ENCODE measurements at regions of chr17 and their contacts with region 1.

Region 1: DNA sequence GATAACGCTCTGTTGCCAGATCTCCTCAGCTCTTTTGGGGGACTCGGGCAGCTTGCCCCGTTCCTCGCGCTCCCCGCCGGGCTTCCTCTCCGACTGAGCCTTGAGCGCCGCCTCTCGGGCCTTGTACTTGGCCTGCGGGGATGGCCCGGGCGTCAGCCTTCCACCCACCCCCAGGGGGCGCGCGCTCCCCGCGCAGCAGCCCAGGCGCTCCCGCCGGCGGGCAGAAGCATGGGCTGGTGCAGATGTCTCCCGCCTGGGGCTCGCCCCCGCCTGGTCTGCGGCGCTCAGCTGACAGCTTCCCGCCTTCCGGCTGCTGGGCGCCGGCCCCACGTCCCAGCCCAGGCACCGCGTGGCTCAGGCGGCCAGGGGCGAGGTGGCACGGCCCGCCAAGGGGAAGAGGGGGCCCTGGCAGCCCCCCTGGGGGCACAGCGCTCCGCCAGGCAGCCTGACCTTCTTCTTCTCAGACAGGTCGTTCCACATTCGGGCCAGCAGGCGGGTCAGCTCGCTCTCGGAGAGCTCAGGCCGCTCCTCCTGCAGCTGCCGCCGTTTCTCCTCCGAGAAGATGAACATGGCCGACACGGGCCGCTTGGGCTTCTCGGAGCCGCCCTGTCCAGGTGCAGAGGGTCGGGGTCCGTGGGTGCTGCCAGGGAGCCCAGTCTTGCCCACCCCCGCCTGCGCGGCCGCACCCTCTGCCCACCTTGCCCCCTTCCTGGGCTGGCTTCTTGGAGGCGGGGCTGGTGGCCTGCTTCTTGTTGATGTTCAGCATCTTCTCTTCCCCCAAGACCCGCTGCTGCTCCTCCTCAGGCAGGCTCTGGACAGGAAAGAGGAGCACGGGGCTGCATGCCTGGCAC is 8.9 kb downstream of the UBTF start:
- DNase-seq: peak; percentile 83 to 96 (median 90)
- ATAC-seq: peak; percentile 96
- H3K4me3 ChIP-seq: peak overlapping the region in 1 of 2 experiments; percentile 12
- H3K4me3 Mint-ChIP-seq: peak overlapping the region; percentile 50
- H3K27ac ChIP-seq: peak overlapping the region in 1 of 2 experiments; percentile 33
- H3K27ac Mint-ChIP-seq: peak overlapping the region; percentile 83
- H3K4me1 ChIP-seq: peaks cover 58% of the 10 kb centered on the region
- H3K4me1 Mint-ChIP-seq: peaks cover 56% of the 10 kb centered on the region
- H3K27me3 ChIP-seq: no peaks in the 10 kb centered on the region
- H3K27me3 Mint-ChIP-seq: no peaks in the 10 kb centered on the region
- CTCF ChIP-seq: peak; percentile 99

Region 2: DNA sequence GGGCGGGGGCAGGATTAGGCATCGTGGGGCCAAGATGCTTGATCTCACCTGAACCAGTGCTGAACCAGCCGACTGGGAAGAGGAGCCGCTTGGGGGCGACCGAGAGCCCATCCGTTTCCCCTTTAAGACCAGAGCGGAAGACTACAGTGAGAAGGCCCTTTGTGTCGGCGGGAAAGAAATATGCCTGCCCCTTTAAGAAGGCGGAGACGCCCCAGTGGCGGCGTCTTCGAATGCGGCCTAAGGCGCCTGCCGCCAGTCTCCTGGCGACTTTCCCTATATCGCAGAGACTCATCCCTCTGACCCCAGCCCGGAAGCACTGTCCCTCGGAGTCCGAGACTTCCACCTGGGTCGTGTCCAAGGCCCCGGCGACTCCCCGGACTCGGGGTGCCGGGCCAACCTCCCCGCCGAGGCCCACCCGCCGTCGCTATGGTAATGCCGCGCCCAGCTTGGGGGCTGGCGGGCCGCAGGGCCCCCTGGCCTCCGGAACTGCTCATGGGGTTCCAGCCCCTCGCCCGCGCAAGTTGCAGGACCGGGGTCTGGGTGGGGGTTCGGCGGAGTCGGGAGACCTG is 68.8 kb before region 1 on chr17 and contains the start of gene HROB:
- CTCF ChIA-PET with region 1: interaction called, 6 read pairs
- POLR2A ChIA-PET with region 1: no interaction called
- intact Hi-C with region 1: loop called in 1 of 2 experiments (anchors 1 kb)
- DNase-seq: peak; percentile 95 to 99 (median 98)
- ATAC-seq: peak; percentile 91
- H3K4me3 ChIP-seq: peak within 1 kb of the TSS; percentile 62 to 80
- H3K4me3 Mint-ChIP-seq: peak within 1 kb of the TSS; percentile 84
- H3K27ac ChIP-seq: peak within 1 kb of the TSS; percentile 49 to 78
- H3K27ac Mint-ChIP-seq: peak within 1 kb of the TSS; percentile 49
- H3K4me1 ChIP-seq: peaks cover 11% of the 10 kb centered on the region
- H3K4me1 Mint-ChIP-seq: peaks cover 10% of the 10 kb centered on the region
- H3K27me3 ChIP-seq: peaks cover 0 to 14% of the 10 kb centered on the region in 2 experiments
- H3K27me3 Mint-ChIP-seq: peaks cover 10% of the 10 kb centered on the region
- CTCF ChIP-seq: peak; percentile 75
- total RNA-seq, gene HROB: 4.0 to 4.9 TPM

Region 3: GRCh38 chr17:44193326-44194084 is 17.1 kb before region 1 on chr17:
- CTCF ChIA-PET with region 1: interaction called, 15 read pairs
- POLR2A ChIA-PET with region 1: interaction called, 5 read pairs
- intact Hi-C with region 1: no loop called
- DNase-seq: no peak
- ATAC-seq: no peak
- H3K4me3 ChIP-seq: no peak overlapping the region
- H3K4me3 Mint-ChIP-seq: no peak overlapping the region
- H3K27ac ChIP-seq: no peak overlapping the region
- H3K27ac Mint-ChIP-seq: no peak overlapping the region
- H3K4me1 ChIP-seq: peaks cover 20% of the 10 kb centered on the region
- H3K4me1 Mint-ChIP-seq: peaks cover 22% of the 10 kb centered on the region
- H3K27me3 ChIP-seq: no peaks in the 10 kb centered on the region
- H3K27me3 Mint-ChIP-seq: no peaks in the 10 kb centered on the region
- CTCF ChIP-seq: no peak

Region 4: DNA sequence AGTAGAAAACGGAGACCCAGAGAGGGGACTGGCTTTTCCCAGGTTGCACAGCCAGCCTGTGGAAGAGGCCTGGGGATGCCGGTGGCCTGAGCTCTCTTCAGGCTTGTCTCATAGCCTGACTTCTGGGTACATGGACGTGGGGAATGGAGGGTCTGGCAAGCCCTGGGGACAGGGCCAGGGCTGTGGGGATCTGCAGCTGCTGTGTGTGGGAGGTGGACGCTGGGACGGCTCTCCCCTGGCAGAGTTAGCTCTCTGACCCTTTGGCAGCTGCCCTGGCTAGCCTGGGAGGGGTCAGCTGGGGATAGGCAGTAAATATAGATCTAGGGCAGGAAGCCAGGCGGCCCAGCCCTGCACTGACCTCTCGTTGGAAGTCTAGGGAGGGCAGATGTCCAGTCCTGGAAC is 36.9 kb after region 1 on chr17:
- CTCF ChIA-PET with region 1: interaction called, 5 read pairs
- POLR2A ChIA-PET with region 1: no interaction called
- intact Hi-C with region 1: loop called in 1 of 2 experiments (anchors 5 kb)
- DNase-seq: no peak
- ATAC-seq: no peak
- H3K4me3 ChIP-seq: no peak overlapping the region
- H3K4me3 Mint-ChIP-seq: peak overlapping the region; percentile 29
- H3K27ac ChIP-seq: no peak overlapping the region
- H3K27ac Mint-ChIP-seq: peak overlapping the region; percentile 76
- H3K4me1 ChIP-seq: peaks cover 47% of the 10 kb centered on the region
- H3K4me1 Mint-ChIP-seq: peaks cover 45% of the 10 kb centered on the region
- H3K27me3 ChIP-seq: no peaks in the 10 kb centered on the region
- H3K27me3 Mint-ChIP-seq: no peaks in the 10 kb centered on the region
- CTCF ChIP-seq: no peak

Region 5: DNA sequence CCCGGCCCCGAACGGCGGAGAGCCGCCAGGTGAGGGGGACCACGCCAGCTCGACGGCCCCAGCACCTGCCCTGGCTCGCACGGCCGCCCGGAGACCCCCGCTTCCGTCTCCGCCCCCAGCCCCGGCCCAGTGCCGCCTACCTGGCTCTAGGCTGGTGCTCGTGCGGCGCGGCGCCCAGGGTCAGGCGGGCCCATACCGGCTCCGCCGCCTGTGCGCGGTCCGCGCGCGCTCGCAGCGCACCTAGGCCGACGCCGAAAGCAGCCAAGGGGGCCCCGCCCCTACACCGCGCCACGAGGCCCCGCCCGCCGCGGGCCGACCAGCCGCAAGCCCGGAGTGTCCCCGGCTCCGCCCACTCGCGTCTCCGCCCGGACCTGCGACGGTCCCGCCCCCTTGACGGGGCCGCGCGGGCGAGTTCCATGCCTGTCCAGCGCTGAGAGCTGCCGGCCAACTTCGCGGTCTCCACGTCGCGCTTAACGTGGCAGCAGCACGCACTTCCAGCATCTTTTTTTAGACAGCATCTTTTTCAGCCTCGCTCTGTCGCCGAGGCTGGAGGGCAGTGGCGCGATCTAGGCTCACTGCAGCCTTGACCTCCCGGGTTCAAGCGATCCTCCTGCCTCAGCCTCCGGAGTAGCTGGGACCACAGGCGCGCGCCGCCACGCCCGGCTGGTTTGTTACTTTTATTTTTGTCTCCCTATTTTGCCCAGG is 114.2 kb after region 1 on chr17 and contains the start of gene SLC25A39:
- CTCF ChIA-PET with region 1: interaction called, 161 read pairs
- POLR2A ChIA-PET with region 1: interaction called, 22 read pairs
- intact Hi-C with region 1: loop called in 1 of 2 experiments (anchors 1 kb)
- DNase-seq: peak; percentile 90 to 98 (median 96)
- ATAC-seq: peak; percentile 72
- H3K4me3 ChIP-seq: peak within 1 kb of the TSS; percentile 84 to 91
- H3K4me3 Mint-ChIP-seq: peak within 1 kb of the TSS; percentile 88
- H3K27ac ChIP-seq: peak within 1 kb of the TSS; percentile 88 to 93
- H3K27ac Mint-ChIP-seq: peak within 1 kb of the TSS; percentile 96
- H3K4me1 ChIP-seq: peaks cover 14% of the 10 kb centered on the region
- H3K4me1 Mint-ChIP-seq: peaks cover 30% of the 10 kb centered on the region
- H3K27me3 ChIP-seq: no peaks in the 10 kb centered on the region
- H3K27me3 Mint-ChIP-seq: no peaks in the 10 kb centered on the region
- CTCF ChIP-seq: no peak
- total RNA-seq, gene SLC25A39: 73.1 to 77.7 TPM

Region 6: DNA sequence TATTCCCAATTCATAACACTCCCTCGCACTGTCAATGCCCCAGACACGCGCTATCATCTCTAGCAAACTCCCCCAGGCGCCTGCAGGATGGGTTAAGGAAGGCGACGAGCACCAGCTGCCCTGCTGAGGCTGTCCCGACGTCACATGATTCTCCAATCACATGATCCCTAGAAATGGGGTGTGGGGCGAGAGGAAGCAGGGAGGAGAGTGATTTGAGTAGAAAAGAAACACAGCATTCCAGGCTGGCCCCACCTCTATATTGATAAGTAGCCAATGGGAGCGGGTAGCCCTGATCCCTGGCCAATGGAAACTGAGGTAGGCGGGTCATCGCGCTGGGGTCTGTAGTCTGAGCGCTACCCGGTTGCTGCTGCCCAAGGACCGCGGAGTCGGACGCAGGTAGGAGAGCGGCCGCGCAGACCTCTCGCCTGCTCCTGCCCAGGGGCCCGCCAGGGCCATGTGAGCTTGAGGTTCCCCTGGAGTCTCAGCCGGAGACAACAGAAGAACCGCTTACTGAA is 134.4 kb after region 1 on chr17 and contains the start of gene GRN:
- CTCF ChIA-PET with region 1: interaction called, 36 read pairs
- POLR2A ChIA-PET with region 1: interaction called, 3 read pairs
- intact Hi-C with region 1: loop called in 1 of 2 experiments (anchors 1 kb)
- DNase-seq: peak; percentile 67 to 91 (median 83)
- ATAC-seq: peak; percentile 99
- H3K4me3 ChIP-seq: peak within 1 kb of the TSS; percentile 63 to 91
- H3K4me3 Mint-ChIP-seq: peak within 1 kb of the TSS; percentile 93
- H3K27ac ChIP-seq: peak within 1 kb of the TSS in 1 of 2 experiments; percentile 61
- H3K27ac Mint-ChIP-seq: peak within 1 kb of the TSS; percentile 70
- H3K4me1 ChIP-seq: peaks cover 12% of the 10 kb centered on the region
- H3K4me1 Mint-ChIP-seq: peaks cover 20% of the 10 kb centered on the region
- H3K27me3 ChIP-seq: no peaks in the 10 kb centered on the region
- H3K27me3 Mint-ChIP-seq: peaks cover 14% of the 10 kb centered on the region
- CTCF ChIP-seq: no peak
- total RNA-seq, gene GRN: 8.5 to 13.2 TPM

Region 7: DNA sequence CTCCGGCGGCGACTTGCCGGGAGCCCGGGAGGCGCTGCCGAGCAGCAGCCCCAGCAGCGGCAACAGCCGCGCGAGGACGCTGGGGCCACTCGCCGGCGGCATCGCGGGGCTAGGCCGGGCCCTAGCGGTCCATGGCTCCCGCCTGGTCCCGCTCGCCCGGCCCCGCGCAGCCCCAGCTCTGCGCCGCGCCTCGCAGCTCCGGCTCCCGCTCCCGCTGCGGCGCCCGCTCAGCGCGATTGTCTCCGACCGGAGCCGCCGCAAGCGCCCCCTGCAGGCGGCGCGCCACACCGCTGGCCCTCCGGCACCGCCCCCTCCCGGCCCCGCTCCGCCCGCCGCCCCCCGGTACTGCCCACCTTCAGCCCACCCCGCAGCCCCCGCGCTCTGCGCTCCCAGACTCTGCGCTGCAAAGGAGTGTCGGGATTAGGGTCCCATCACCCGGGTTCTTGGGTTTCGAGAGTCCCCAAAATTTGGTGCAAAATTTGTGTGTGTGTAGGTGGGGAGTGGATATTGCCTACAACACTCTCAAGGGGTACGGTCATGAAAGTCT is 153.1 kb after region 1 on chr17 and contains the start of gene FAM171A2:
- CTCF ChIA-PET with region 1: interaction called, 11 read pairs
- POLR2A ChIA-PET with region 1: no interaction called
- intact Hi-C with region 1: no loop called
- DNase-seq: peak; percentile 44 to 86 (median 61)
- ATAC-seq: peak; percentile 92
- H3K4me3 ChIP-seq: peak within 1 kb of the TSS; percentile 51 to 59
- H3K4me3 Mint-ChIP-seq: peak within 1 kb of the TSS; percentile 80
- H3K27ac ChIP-seq: no peak within 1 kb of the TSS
- H3K27ac Mint-ChIP-seq: no peak within 1 kb of the TSS
- H3K4me1 ChIP-seq: peaks cover 3% of the 10 kb centered on the region
- H3K4me1 Mint-ChIP-seq: peaks cover 8% of the 10 kb centered on the region
- H3K27me3 ChIP-seq: peaks cover 0 to 12% of the 10 kb centered on the region in 2 experiments
- H3K27me3 Mint-ChIP-seq: peaks cover 19% of the 10 kb centered on the region
- CTCF ChIP-seq: peak; percentile 89
- total RNA-seq, gene FAM171A2: 0.24 to 0.44 TPM

Region 8: DNA sequence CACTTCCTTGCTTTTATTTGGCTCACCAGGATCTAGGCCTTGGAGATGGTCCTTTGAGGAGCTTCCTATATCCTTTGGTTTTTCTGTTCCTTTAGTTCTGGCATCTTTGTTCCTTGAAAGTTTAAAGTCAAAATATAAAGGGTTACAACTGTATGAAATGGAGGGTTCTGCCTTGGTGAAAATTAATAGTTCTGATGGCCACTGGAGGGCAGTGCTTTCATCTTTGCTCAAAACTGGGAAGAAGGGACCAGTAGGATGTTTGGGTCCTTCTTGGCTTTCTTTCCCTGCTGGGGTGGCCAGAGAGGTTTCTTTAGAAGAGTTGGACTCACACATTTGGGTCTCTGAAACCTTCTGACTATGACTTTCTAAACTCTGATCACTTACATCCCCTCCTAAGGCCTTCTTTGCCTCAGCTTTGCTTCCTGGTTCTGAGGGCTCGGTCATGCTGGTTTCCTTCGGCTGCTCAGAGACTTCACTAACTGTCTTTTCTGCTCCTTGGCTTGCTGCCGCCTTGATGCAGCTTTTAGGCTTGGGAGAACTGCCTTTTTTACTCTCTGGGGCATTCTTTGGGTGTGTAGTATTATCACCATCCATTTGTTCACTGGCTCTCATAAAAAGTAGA is 189.8 kb after region 1 on chr17:
- CTCF ChIA-PET with region 1: no interaction called
- POLR2A ChIA-PET with region 1: no interaction called
- intact Hi-C with region 1: no loop called
- DNase-seq: no peak
- ATAC-seq: no peak
- H3K4me3 ChIP-seq: no peak overlapping the region
- H3K4me3 Mint-ChIP-seq: no peak overlapping the region
- H3K27ac ChIP-seq: no peak overlapping the region
- H3K27ac Mint-ChIP-seq: no peak overlapping the region
- H3K4me1 ChIP-seq: no peaks in the 10 kb centered on the region
- H3K4me1 Mint-ChIP-seq: no peaks in the 10 kb centered on the region
- H3K27me3 ChIP-seq: no peaks in the 10 kb centered on the region
- H3K27me3 Mint-ChIP-seq: no peaks in the 10 kb centered on the region
- CTCF ChIP-seq: no peak

Measured in CD8-positive, alpha-beta T cell (primary cell).